Heart left ventricle (tissue), 16 donors: ENCODE measurements at regions of chr1 and their contacts with region 1.

Region 1: GRCh38 chr1:34742667-34743270 is 12.1 kb upstream of the GJB5 start:
- DNase-seq: peak; percentile 66 to 86 (median 70)
- ATAC-seq: peak; percentile 81 to 96 (median 88)
- H3K4me3 ChIP-seq: no peak overlapping the region
- H3K27ac ChIP-seq: no peak overlapping the region
- H3K4me1 ChIP-seq: no peaks in the 10 kb centered on the region
- H3K27me3 ChIP-seq: peaks cover 0 to 25% (median 5%) of the 10 kb centered on the region in 9 donors
- CTCF ChIP-seq: peak; percentile 86 to 98 (median 94)
- POLR2A ChIP-seq: no peak

Region 2: GRCh38 chr1:33633019-33633801 is 1109.6 kb before region 1 on chr1:
- intact Hi-C with region 1: loop called in 8 of 10 experiments (anchors 1 to 10 kb)
- DNase-seq: peak; percentile 88 to 93 (median 89)
- ATAC-seq: peak; percentile 35 to 89 (median 84)
- H3K4me3 ChIP-seq: no peak overlapping the region
- H3K27ac ChIP-seq: no peak overlapping the region
- H3K4me1 ChIP-seq: peaks cover 0 to 11% (median 0%) of the 10 kb centered on the region in 12 donors
- H3K27me3 ChIP-seq: peaks cover 0 to 19% (median 0%) of the 10 kb centered on the region in 9 donors
- CTCF ChIP-seq: peak; percentile 94 to 100 (median 97)
- POLR2A ChIP-seq: no peak

Region 3: GRCh38 chr1:33735621-33736020 is 1007.1 kb before region 1 on chr1:
- intact Hi-C with region 1: loop called in 2 of 10 experiments (anchors 5 to 10 kb)
- DNase-seq: no peak
- ATAC-seq: no peak
- H3K4me3 ChIP-seq: no peak overlapping the region
- H3K27ac ChIP-seq: no peak overlapping the region
- H3K4me1 ChIP-seq: no peaks in the 10 kb centered on the region
- H3K27me3 ChIP-seq: peaks cover 0 to 8% (median 0%) of the 10 kb centered on the region in 9 donors
- CTCF ChIP-seq: peak in 10 of 12 donors; percentile 5 to 45 (median 38)
- POLR2A ChIP-seq: no peak

Region 4: DNA sequence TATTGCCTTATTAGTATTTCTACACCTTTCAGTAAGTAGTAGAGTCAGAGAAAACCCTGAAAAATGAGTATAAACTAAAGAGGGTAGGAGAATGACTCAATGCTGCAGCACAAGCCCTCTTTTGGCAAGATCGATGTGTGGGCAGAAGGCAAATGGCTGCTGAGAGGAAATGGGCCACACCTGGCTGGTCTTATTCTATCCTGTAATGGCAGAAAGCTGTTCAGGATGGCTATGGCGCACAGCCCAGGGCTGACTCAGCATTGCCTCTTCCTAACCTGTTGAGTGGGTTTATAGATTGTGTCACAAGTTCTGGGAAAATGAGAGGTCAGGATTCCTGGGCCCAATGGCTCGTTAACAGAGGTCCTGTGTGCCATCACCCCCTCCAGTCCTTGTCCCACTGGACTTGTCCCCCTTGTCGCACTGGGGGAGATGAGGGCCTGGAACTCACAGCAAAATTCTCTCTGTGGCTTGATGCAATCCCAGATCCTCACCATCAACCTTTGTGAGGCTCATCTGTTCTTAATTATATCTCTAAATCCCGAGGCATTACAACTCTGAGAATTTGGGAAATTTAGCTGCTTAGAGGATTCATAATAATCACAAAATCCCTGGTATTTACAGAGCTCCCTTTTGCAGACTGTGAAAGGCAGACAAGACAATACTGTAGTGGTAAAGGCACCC is 865.7 kb before region 1 on chr1:
- intact Hi-C with region 1: loop called in 1 of 10 experiments (anchors 5 kb)
- DNase-seq: peak in 4 of 5 donors; percentile 33 to 81 (median 54)
- ATAC-seq: peak in 2 of 4 donors; percentile 60 to 91
- H3K4me3 ChIP-seq: no peak overlapping the region
- H3K27ac ChIP-seq: peak overlapping the region in 1 of 12 donors; percentile 4
- H3K4me1 ChIP-seq: peaks cover 0 to 13% (median 0%) of the 10 kb centered on the region in 12 donors
- H3K27me3 ChIP-seq: peaks cover 0 to 8% (median 0%) of the 10 kb centered on the region in 9 donors
- CTCF ChIP-seq: no peak
- POLR2A ChIP-seq: no peak

Region 5: GRCh38 chr1:34087986-34088385 is 654.8 kb before region 1 on chr1:
- intact Hi-C with region 1: no loop called
- DNase-seq: no peak
- ATAC-seq: no peak
- H3K4me3 ChIP-seq: no peak overlapping the region
- H3K27ac ChIP-seq: no peak overlapping the region
- H3K4me1 ChIP-seq: no peaks in the 10 kb centered on the region
- H3K27me3 ChIP-seq: peaks cover 0 to 4% (median 0%) of the 10 kb centered on the region in 9 donors
- CTCF ChIP-seq: no peak
- POLR2A ChIP-seq: no peak

Region 6: GRCh38 chr1:34455121-34455520 is 287.6 kb before region 1 on chr1:
- intact Hi-C with region 1: loop called in 5 of 10 experiments (anchors 5 to 10 kb)
- DNase-seq: no peak
- ATAC-seq: no peak
- H3K4me3 ChIP-seq: no peak overlapping the region
- H3K27ac ChIP-seq: no peak overlapping the region
- H3K4me1 ChIP-seq: no peaks in the 10 kb centered on the region
- H3K27me3 ChIP-seq: peaks cover 0 to 4% (median 0%) of the 10 kb centered on the region in 9 donors
- CTCF ChIP-seq: no peak
- POLR2A ChIP-seq: no peak

Region 7: DNA sequence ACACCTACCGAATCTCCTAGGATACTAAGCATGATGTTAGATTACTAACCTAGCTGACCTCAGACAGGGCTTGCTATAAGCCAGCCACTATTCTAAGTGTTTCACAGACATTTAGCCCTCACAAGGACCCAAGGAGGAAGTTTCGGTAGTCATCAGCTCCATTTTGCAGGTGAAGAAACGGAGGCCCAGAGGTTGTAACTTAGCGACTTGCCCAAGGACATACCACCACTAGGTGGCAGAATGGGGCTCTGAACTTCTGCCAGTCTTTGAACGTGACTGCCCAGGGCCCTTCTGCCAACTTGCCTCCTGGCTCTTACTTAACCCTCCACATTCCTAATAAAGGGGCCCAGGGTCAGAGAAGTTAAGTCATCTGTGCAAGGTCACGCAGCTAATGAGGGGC is 282.6 kb before region 1 on chr1:
- intact Hi-C with region 1: loop called in 5 of 10 experiments (anchors 5 to 10 kb)
- DNase-seq: peak in 1 of 5 donors; percentile 10
- ATAC-seq: no peak
- H3K4me3 ChIP-seq: no peak overlapping the region
- H3K27ac ChIP-seq: no peak overlapping the region
- H3K4me1 ChIP-seq: no peaks in the 10 kb centered on the region
- H3K27me3 ChIP-seq: peaks cover 0 to 14% (median 0%) of the 10 kb centered on the region in 9 donors
- CTCF ChIP-seq: peak; percentile 6 to 63 (median 38)
- POLR2A ChIP-seq: no peak